ENCODE measurements at regions of chr22 and their contacts with region 1.

Region 1: DNA sequence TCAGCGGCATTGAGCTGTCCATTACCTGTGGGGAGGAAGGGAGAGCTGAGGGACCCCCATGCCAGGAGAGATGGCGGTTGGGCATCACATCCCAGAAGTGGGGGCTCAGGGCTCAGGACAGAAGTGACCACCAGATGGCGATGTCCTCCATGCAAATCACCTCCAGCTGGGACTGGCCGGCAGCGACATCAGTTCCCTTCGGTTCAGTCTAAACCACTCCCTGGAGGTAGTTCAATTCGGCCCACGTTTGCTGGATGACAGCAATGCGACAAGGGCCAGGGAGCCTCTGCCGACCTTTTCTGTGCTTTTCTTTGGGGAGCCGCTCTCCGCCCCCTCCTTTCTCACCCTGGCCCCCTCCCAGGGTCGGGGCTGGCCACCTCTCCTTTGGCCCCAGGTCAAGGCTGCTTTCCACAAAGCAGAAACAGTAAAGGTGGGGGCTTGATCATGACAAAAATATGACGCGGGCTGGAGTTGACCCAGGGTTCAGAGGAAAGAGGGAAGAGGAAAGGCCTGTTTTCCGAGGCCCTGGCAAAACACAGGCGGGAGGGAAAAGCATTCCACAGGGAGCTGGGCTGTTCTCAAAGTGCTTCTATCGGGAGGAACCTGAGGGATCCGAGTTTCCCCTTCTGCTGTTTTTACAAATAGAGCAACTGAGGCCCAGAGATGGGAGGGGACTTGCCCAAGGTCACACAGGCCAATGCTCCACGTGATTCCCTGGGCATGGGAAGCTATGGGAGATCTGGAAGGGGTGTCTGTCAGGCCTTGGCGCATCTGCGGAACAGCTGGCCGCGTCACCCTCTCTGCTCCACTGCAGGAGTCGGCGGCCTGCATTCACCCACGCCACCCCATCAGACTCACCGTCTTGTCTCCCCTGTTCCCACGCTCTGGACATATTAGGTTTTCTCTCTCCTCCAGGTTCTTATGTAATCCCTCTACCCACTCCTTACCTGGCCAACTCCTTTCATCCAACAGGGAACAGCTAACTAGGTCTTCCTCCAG is 54.7 kb downstream of the FBXO7 start:
- DNase-seq: peak; percentile 84
- ATAC-seq: peak; percentile 70
- H3K4me3 Mint-ChIP-seq: no peak overlapping the region
- H3K27ac Mint-ChIP-seq: no peak overlapping the region
- H3K4me1 Mint-ChIP-seq: no peaks in the 10 kb centered on the region
- H3K27me3 Mint-ChIP-seq: peaks cover 2% of the 10 kb centered on the region

Region 2: GRCh38 chr22:32618441-32619140 is 89.3 kb after region 1 on chr22:
- CTCF ChIA-PET with region 1: no interaction called
- POLR2A ChIA-PET with region 1: no interaction called
- intact Hi-C with region 1: no loop called
- DNase-seq: no peak
- ATAC-seq: no peak
- H3K4me3 Mint-ChIP-seq: no peak overlapping the region
- H3K27ac Mint-ChIP-seq: no peak overlapping the region
- H3K4me1 Mint-ChIP-seq: no peaks in the 10 kb centered on the region
- H3K27me3 Mint-ChIP-seq: no peaks in the 10 kb centered on the region

Region 3: GRCh38 chr22:32660292-32660691 is 131.0 kb after region 1 on chr22:
- CTCF ChIA-PET with region 1: interaction called, 3 read pairs
- POLR2A ChIA-PET with region 1: no interaction called
- intact Hi-C with region 1: loop called in 1 of 2 experiments (anchors 1 kb)
- DNase-seq: peak; percentile 74
- ATAC-seq: peak; percentile 30
- H3K4me3 Mint-ChIP-seq: no peak overlapping the region
- H3K27ac Mint-ChIP-seq: no peak overlapping the region
- H3K4me1 Mint-ChIP-seq: no peaks in the 10 kb centered on the region
- H3K27me3 Mint-ChIP-seq: peaks cover 10% of the 10 kb centered on the region

Region 4: GRCh38 chr22:32796865-32797573 is 267.7 kb after region 1 on chr22:
- CTCF ChIA-PET with region 1: interaction called, 47 read pairs
- POLR2A ChIA-PET with region 1: no interaction called
- intact Hi-C with region 1: loop called (anchors 1 kb)
- DNase-seq: peak; percentile 81
- ATAC-seq: peak; percentile 95
- H3K4me3 Mint-ChIP-seq: no peak overlapping the region
- H3K27ac Mint-ChIP-seq: no peak overlapping the region
- H3K4me1 Mint-ChIP-seq: peaks cover 2% of the 10 kb centered on the region
- H3K27me3 Mint-ChIP-seq: peaks cover 37% of the 10 kb centered on the region

Region 5: DNA sequence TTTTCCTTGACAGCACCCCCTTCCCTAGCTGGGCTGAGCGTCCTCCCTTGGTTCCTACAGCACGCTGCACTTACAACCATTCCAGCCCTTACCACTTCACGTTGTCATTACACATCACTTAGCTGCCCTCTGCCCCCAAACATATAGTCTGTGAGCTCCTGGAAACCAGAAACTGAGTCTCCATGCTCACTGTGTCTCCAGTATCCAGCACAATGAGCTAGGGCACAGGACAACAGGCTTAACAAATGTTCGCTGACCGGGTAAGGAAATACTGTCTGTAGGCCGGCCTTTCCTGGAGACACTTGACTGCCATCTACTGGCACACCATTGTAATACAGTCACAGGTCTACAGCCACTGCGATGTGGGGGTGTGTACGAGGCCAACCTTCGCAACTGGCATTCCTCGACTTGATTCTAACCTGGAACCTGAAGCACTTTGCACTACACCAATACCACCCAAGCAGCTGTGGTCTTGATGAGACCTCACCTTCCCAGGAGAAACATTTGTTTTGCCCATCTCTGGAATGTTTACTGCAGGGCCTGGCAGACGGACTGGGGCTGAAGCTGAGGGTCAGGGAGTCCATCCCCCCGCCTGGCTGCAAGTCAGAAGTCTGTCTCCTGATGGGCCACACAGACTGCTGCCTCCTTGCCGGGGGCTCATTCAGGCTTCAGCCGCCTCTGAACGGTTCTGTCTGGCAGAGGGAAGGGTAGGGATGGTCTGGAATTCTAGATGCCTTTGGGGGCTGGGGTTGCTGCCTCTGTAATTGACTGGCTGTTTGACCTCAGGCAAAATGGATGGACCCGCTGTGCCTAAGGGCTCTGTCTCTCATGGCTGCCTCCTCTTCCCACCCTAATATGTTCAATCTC is 456.8 kb after region 1 on chr22:
- CTCF ChIA-PET with region 1: interaction called, 19 read pairs
- POLR2A ChIA-PET with region 1: no interaction called
- intact Hi-C with region 1: loop called (anchors 2 to 5 kb)
- DNase-seq: peak; percentile 70
- ATAC-seq: peak; percentile 83
- H3K4me3 Mint-ChIP-seq: no peak overlapping the region
- H3K27ac Mint-ChIP-seq: no peak overlapping the region
- H3K4me1 Mint-ChIP-seq: no peaks in the 10 kb centered on the region
- H3K27me3 Mint-ChIP-seq: no peaks in the 10 kb centered on the region

Region 6: GRCh38 chr22:33000342-33001280 is 471.3 kb after region 1 on chr22:
- CTCF ChIA-PET with region 1: no interaction called
- POLR2A ChIA-PET with region 1: no interaction called
- intact Hi-C with region 1: loop called (anchors 1 kb)
- DNase-seq: peak; percentile 64
- ATAC-seq: no peak
- H3K4me3 Mint-ChIP-seq: no peak overlapping the region
- H3K27ac Mint-ChIP-seq: no peak overlapping the region
- H3K4me1 Mint-ChIP-seq: no peaks in the 10 kb centered on the region
- H3K27me3 Mint-ChIP-seq: no peaks in the 10 kb centered on the region

Region 7: GRCh38 chr22:33049119-33049729 is 519.9 kb after region 1 on chr22:
- CTCF ChIA-PET with region 1: no interaction called
- POLR2A ChIA-PET with region 1: no interaction called
- intact Hi-C with region 1: loop called in 1 of 2 experiments (anchors 2 kb)
- DNase-seq: peak; percentile 79
- ATAC-seq: peak; percentile 49
- H3K4me3 Mint-ChIP-seq: no peak overlapping the region
- H3K27ac Mint-ChIP-seq: no peak overlapping the region
- H3K4me1 Mint-ChIP-seq: no peaks in the 10 kb centered on the region
- H3K27me3 Mint-ChIP-seq: peaks cover 28% of the 10 kb centered on the region

Region 8: DNA sequence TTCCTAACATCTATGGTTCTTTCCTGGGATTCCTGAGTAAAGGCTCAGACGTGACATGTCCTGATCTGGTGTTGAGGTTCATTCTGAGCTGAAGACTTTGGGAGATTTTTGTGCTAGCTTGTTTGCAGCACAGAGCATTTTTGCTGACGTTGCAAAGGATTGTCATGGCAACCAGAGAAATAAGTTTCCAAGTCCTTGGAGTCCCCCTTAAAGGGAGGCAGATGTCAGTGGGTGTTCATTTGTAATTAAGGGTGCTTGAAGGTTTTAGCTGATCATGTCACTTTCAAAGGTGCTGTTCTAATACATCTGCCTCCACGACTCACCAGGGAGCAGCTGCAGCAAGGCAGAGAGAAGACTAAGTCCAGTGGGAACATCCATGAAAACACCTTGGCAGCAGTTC is 534.3 kb after region 1 on chr22:
- CTCF ChIA-PET with region 1: no interaction called
- POLR2A ChIA-PET with region 1: no interaction called
- intact Hi-C with region 1: no loop called
- DNase-seq: no peak
- ATAC-seq: no peak
- H3K4me3 Mint-ChIP-seq: no peak overlapping the region
- H3K27ac Mint-ChIP-seq: no peak overlapping the region
- H3K4me1 Mint-ChIP-seq: no peaks in the 10 kb centered on the region
- H3K27me3 Mint-ChIP-seq: peaks cover 26% of the 10 kb centered on the region

Region 9: DNA sequence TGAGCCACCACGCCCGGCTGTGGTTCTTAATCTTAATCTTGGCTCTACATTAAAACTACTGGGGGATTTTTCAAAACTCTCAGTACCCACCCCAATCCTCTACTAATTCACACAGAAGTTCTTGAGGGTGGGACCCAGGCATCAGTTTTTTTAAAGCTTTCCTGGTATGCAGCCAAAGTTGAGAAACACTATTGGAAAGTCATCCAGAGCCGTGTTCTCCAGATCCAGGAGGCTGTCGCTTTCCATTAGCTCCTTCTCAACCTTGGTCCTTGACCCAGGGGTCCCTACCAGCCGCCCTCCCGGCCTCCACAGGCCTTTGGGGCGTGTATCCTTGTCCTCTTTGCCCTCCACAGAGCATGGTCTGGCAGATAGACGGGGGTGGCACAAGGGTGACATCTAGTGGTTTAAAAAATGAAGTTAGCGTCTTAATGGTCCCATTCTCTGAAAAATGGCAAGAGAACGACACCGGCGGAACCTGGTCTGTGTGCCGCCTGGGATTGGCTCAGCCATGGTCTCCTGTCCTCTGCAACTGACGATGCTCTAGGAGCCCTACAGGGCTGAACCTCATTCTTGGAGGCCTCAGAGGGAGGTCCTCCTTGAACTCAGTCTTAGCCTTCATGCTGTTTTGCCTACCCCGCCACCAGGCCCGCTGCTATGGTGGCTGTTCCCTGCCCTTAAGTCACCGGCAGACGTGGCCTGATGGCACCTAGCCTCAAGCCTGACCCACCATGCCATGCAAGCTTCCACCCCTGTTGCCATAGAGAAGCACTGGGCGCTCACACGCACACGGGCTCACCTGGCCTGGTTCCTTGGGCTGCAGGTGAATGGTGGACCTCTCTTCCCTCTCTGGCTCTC is 680.9 kb after region 1 on chr22:
- CTCF ChIA-PET with region 1: no interaction called
- POLR2A ChIA-PET with region 1: no interaction called
- intact Hi-C with region 1: loop called in 1 of 2 experiments (anchors 10 kb)
- DNase-seq: peak; percentile 38
- ATAC-seq: peak; percentile 58
- H3K4me3 Mint-ChIP-seq: no peak overlapping the region
- H3K27ac Mint-ChIP-seq: no peak overlapping the region
- H3K4me1 Mint-ChIP-seq: no peaks in the 10 kb centered on the region
- H3K27me3 Mint-ChIP-seq: peaks cover 15% of the 10 kb centered on the region

Measured in activated CD4-positive, alpha-beta T cell treated with anti-CD3 and anti-CD28 coated beads for 36 hours (primary cell).